ENCODE measurements at regions of chr2 and their contacts with region 1.

Region 1: DNA sequence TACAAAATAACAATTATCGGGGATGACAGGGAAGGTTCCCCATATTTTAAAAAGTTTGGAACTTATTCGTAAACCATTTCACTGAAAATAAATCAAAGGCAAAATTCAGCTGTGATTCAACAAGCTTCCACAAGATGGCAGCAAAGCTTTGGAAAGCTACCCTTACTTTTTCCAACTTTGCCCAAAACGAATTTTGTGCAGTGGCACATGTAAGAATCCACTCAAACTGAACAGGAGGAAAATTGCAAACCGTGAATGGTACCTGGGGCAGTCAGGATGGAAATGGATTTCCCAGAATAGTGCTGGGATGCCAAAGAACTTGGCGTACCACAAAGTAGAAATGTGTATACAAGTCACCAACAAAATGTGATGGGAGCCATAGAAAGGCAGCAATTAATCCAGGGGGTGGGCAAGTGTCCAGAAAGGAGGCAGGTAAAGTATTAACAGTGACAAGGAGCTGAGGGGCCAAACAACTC is 10.7 kb downstream of the RPL31 start:
- DNase-seq: no peak
- ATAC-seq: peak; percentile 58
- H3K4me3 ChIP-seq: no peak overlapping the region
- H3K27ac ChIP-seq: no peak overlapping the region
- H3K4me1 ChIP-seq: no peaks in the 10 kb centered on the region
- H3K27me3 ChIP-seq: no peaks in the 10 kb centered on the region
- CTCF ChIP-seq: peak; percentile 80

Region 2: DNA sequence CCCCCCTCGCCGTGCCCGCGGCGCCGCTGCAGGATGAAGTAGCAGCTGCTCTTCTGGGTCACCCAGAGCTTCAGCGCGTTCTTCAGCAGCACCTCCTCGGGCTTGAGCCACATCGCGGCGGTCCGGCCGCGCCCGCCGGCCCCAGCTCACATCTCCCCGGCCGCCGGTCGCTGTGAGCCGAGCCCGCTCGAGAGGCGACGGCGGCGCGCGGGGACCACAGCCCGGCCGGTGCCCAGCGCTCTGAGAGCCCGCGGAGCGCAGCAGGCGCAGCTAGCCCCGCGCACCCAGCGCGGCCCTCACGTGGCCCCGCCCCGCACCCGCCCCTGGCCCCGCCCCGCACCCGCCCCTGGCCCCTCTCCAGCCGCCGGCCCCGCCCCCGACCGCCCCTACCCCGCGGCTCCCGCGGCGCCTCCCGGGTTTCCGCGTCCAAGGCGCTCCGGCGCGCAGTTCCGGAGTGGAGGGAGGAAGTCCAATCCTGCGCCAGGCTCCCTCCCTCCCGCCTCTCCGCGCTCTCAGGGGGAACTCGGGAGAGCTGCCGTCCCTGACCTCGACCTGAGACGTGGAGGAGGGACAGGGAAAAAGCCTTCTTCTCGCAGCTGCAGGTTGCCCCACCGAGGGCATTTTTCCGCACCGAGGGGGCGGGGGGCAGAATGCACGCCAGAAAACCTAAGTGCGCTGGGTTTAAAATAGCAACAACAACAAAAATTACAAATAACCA is 138.6 kb after region 1 on chr2 and contains the start of gene TBC1D8:
- intact Hi-C with region 1: loop called (anchors 5 kb)
- DNase-seq: peak; percentile 95
- ATAC-seq: peak; percentile 91
- H3K4me3 ChIP-seq: peak within 1 kb of the TSS; percentile 72
- H3K27ac ChIP-seq: peak within 1 kb of the TSS; percentile 81
- H3K4me1 ChIP-seq: peaks cover 19% of the 10 kb centered on the region
- H3K27me3 ChIP-seq: no peaks in the 10 kb centered on the region
- CTCF ChIP-seq: no peak
- total RNA-seq, gene TBC1D8: 19.9 TPM